ENCODE measurements at regions of chr12 and their contacts with region 1.

Region 1: GRCh38 chr12:43750814-43751213 is 7.8 kb downstream of the PUS7L start:
- DNase-seq: no peak
- H3K4me3 ChIP-seq: no peak overlapping the region
- H3K27ac ChIP-seq: no peak overlapping the region
- H3K4me1 ChIP-seq: no peaks in the 10 kb centered on the region
- H3K27me3 ChIP-seq: no peaks in the 10 kb centered on the region
- CTCF ChIP-seq: no peak
- POLR2A ChIP-seq: no peak

Region 2: GRCh38 chr12:45532113-45532512 is 1781.3 kb after region 1 on chr12:
- intact Hi-C with region 1: loop called (anchors 5 kb)
- DNase-seq: no peak
- H3K4me3 ChIP-seq: no peak overlapping the region
- H3K27ac ChIP-seq: no peak overlapping the region
- H3K4me1 ChIP-seq: no peaks in the 10 kb centered on the region
- H3K27me3 ChIP-seq: no peaks in the 10 kb centered on the region
- CTCF ChIP-seq: no peak
- POLR2A ChIP-seq: no peak